ENCODE measurements at regions of chr7 and their contacts with region 1.

Region 1: DNA sequence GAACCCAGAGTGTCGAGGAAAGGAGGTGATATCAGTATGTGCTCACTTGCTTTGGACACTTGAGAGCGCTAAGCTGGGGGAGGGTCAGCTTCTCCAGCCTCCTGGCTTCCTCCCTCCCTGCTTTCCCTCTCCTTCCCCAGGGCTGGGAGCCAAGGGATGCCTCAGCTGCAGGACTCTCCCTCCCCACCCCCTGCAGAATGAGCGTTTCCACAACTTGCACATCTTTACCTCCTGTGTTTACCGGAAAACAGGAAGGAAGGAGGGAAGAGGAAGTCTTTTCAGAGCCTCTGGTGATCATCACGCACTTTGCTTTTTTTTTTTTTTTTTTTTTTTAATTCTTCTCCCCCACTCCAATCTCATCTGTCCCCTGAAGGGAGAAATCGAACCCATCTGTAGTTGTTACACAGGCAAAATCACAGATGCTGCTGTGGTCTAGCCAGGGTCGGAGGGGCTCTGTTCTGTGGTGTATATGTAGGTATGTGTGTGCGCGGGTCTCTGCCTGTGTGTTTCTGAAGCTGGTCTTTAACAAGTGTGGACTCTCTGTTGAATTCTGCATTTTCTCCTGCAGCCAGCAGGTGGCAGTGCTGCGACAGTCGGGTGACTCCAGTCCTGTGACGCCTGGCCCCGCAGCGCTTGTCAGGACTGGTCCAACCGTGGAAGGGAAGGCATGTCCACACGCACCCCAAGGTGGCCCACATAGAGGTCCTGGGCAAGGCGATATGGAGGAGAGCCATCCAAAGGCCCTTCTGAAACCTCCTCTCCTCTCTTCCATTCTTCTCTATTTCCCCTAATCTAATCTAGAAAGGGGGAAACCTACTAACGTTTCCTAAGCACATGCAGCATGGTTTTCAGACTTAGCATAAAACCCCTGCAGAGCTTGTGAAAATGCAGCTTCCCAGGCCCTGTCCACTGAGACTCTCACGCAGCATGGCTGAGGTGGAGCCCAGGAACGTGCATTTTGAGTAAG is 257.6 kb downstream of the PLXNA4 start:
- DNase-seq: peak; percentile 61
- ATAC-seq: peak; percentile 62
- H3K4me3 Mint-ChIP-seq: no peak overlapping the region
- H3K27ac Mint-ChIP-seq: no peak overlapping the region
- H3K4me1 Mint-ChIP-seq: peaks cover 6% of the 10 kb centered on the region
- H3K27me3 Mint-ChIP-seq: peaks cover 14% of the 10 kb centered on the region
- CTCF ChIP-seq: peak; percentile 50

Region 2: GRCh38 chr7:132580717-132581285 is 262.2 kb after region 1 on chr7:
- CTCF ChIA-PET with region 1: interaction called, 3 read pairs
- POLR2A ChIA-PET with region 1: no interaction called
- intact Hi-C with region 1: loop called (anchors 2 kb)
- DNase-seq: no peak
- ATAC-seq: no peak
- H3K4me3 Mint-ChIP-seq: no peak overlapping the region
- H3K27ac Mint-ChIP-seq: no peak overlapping the region
- H3K4me1 Mint-ChIP-seq: peaks cover 10% of the 10 kb centered on the region
- H3K27me3 Mint-ChIP-seq: peaks cover 45% of the 10 kb centered on the region
- CTCF ChIP-seq: no peak

Region 3: DNA sequence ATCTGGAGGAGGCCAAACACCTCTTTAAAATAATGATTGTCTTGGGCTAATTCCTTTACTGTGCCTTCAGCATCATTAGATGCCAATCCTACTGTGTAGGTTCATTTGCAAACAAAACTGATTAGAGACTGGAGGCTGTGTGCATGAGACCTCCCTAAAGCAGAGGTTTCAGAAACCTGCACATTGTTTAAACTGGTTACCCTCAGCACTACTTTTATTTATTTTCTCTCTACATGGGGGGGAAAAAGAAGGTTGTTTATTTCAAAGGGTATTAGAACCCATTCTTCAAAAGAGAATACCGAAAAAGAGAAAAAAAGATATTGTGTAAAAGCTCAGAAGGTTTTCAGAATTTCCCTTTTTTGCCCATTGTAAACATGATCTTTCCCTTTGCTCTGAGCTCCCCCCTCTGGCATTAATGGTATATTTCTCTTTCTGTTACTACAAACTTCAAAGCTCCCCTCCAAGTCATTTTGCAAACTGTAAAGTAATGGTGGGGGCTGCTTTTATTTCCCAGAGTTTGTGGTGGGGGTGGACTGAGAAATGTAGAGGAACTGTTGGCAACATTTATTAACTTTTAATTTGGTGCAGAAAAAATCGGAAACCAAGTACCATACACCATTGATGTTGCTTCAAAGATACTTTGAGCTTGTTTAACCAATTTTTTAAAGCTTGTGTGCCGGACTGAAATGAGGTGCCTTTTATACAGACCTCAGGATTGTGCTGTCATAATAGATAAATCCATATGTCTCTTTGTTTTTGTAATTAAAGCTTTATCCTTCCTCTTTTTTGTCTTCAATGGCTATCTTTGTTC is 1115.6 kb after region 1 on chr7:
- CTCF ChIA-PET with region 1: interaction called, 22 read pairs
- POLR2A ChIA-PET with region 1: no interaction called
- intact Hi-C with region 1: no loop called
- DNase-seq: no peak
- ATAC-seq: no peak
- H3K4me3 Mint-ChIP-seq: no peak overlapping the region
- H3K27ac Mint-ChIP-seq: no peak overlapping the region
- H3K4me1 Mint-ChIP-seq: peaks cover 2% of the 10 kb centered on the region
- H3K27me3 Mint-ChIP-seq: no peaks in the 10 kb centered on the region
- CTCF ChIP-seq: no peak

Region 4: GRCh38 chr7:133742709-133743538 is 1424.3 kb after region 1 on chr7:
- CTCF ChIA-PET with region 1: no interaction called
- POLR2A ChIA-PET with region 1: no interaction called
- intact Hi-C with region 1: loop called (anchors 2 kb)
- DNase-seq: no peak
- ATAC-seq: no peak
- H3K4me3 Mint-ChIP-seq: no peak overlapping the region
- H3K27ac Mint-ChIP-seq: peak overlapping the region; percentile 37
- H3K4me1 Mint-ChIP-seq: peaks cover 2% of the 10 kb centered on the region
- H3K27me3 Mint-ChIP-seq: no peaks in the 10 kb centered on the region
- CTCF ChIP-seq: no peak

Region 5: GRCh38 chr7:133853706-133854276 is 1535.2 kb after region 1 on chr7:
- CTCF ChIA-PET with region 1: no interaction called
- POLR2A ChIA-PET with region 1: no interaction called
- intact Hi-C with region 1: loop called (anchors 10 kb)
- DNase-seq: no peak
- ATAC-seq: peak; percentile 66
- H3K4me3 Mint-ChIP-seq: no peak overlapping the region
- H3K27ac Mint-ChIP-seq: no peak overlapping the region
- H3K4me1 Mint-ChIP-seq: peaks cover 13% of the 10 kb centered on the region
- H3K27me3 Mint-ChIP-seq: no peaks in the 10 kb centered on the region
- CTCF ChIP-seq: no peak

Region 6: DNA sequence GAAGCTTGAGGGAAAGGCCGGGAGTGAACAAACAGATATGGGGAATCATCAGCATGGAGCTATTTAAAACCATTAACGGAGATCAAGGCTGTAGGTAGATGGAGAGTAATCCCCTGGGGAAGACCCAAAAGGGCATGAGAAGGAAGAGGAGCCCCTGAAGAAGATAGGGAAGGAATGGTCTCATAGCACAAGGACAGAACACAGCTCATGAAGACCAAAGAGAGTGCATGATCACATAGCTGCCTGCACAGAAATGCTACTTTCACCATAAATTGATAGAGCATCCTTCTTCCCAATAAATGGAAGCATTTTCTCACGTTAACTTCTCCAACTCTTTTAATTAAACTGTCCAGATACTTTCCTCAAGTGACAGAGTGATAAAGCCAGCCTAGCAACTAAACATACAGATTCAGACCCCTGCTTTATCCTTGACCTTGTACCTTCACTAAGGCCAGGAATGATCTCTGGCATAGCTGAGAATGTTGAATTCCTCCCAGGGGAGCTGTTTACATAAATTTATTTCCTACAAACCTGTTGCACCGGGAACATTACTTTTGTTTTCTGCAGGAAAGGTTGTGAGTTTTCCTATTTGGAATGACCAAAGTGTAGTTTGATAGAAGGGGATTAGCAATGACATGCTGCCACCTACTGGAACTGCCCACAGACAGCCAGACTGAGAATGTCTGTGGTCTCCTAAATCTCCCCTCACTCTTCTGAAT is 1697.7 kb after region 1 on chr7:
- CTCF ChIA-PET with region 1: interaction called, 3 read pairs
- POLR2A ChIA-PET with region 1: no interaction called
- intact Hi-C with region 1: loop called (anchors 2 kb)
- DNase-seq: no peak
- ATAC-seq: no peak
- H3K4me3 Mint-ChIP-seq: no peak overlapping the region
- H3K27ac Mint-ChIP-seq: no peak overlapping the region
- H3K4me1 Mint-ChIP-seq: no peaks in the 10 kb centered on the region
- H3K27me3 Mint-ChIP-seq: no peaks in the 10 kb centered on the region
- CTCF ChIP-seq: no peak

Region 7: GRCh38 chr7:134140889-134141867 is 1822.5 kb after region 1 on chr7:
- CTCF ChIA-PET with region 1: interaction called, 11 read pairs
- POLR2A ChIA-PET with region 1: no interaction called
- intact Hi-C with region 1: no loop called
- DNase-seq: peak; percentile 32
- ATAC-seq: peak; percentile 89
- H3K4me3 Mint-ChIP-seq: no peak overlapping the region
- H3K27ac Mint-ChIP-seq: no peak overlapping the region
- H3K4me1 Mint-ChIP-seq: peaks cover 4% of the 10 kb centered on the region
- H3K27me3 Mint-ChIP-seq: no peaks in the 10 kb centered on the region
- CTCF ChIP-seq: no peak